RWPE1 (cell line): ENCODE measurements at regions of chr3 and their contacts with region 1.

Region 1: DNA sequence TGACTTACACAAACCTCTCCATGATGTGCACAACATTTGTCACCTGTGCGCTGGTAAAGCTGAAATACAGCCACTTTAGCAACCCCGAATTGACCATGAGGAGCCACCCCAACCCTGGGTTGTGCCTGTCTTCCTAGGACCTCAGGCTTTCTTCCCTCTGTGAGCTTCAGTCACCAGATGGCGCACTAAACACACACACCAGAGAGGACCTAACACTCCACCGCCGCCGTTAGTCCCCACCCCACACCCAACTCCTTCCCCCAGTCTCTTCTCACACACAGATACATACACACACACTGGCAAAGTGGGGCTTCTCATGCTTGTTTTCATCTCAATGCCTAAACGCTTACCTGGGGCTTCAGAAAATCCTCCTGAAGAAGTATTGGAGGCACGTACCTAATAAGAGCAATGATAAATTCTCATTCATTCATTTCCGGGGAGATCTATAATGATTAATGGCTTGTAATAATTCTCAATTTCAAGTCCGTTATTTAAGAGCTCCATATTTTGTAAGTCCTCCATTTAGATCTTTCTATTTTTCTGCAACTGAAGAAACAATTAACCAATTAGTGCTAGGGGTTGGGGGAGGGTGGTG is 2.1 kb upstream of the CCDC80 start:
- DNase-seq: peak; percentile 84
- H3K27ac ChIP-seq: no peak overlapping the region
- CTCF ChIP-seq: peak; percentile 90

Region 2: DNA sequence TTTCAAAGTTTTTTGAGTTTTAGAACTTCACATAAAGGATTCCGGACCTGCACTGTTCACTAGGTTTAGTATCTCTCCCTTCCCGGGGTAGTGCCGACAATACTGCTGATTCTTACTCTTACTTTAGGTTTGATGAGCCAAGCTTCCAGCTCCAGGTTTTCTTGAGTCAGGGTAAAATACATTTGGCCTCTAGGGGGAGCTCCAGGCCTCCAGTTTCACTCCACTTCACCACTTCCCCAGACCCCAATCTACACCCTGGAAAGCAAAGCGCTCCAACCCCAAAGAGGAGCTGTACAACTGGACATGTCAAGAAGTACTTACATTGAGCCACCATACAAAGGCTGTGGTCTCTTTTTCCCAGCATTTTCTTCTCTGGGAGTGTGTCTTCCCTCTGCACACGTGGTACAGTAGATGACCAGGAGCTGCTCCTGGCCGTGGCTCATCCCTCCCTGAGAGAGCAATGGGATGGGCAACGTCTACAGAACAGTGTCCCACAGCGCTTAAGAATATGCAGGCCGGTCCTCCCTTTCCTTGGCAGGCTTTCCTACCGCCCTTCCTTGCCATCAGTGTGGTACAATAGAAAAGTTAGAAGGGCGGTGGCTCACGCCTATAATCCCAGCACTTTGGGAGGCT is 91.8 kb after region 1 on chr3:
- CTCF ChIA-PET with region 1: interaction called, 15 read pairs
- POLR2A ChIA-PET with region 1: no interaction called
- DNase-seq: peak; percentile 52
- H3K27ac ChIP-seq: no peak overlapping the region
- CTCF ChIP-seq: peak; percentile 43

Region 3: DNA sequence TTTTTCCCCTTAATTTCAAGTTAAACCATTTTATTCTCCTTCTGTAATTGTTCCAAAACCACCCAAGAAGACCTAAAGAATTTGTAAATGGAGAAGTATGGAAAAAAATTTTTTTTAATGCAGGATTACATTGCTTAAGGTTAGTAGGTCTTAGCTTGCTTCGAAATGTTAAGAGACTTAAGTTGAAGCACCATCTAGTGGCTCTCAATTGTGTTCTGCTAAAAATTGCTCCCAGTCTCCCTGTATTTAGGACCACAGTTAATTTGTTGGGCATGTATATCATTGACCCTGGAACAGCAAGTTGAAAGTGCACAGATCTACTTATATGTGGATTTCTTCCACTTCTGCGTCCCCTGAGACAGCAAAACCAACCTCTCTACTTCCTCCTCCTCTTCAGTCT is 171.3 kb after region 1 on chr3:
- CTCF ChIA-PET with region 1: interaction called, 34 read pairs
- POLR2A ChIA-PET with region 1: no interaction called
- DNase-seq: peak; percentile 45
- H3K27ac ChIP-seq: no peak overlapping the region
- CTCF ChIP-seq: peak; percentile 51